AG04449 (cell line): ENCODE measurements at regions of chr19 and their contacts with region 1.

Region 1: GRCh38 chr19:39390755-39391592 is at the starts of genes MED29 and PAF1:
- DNase-seq: peak; percentile 97
- H3K4me3 ChIP-seq: peak within 1 kb of the TSS; percentile 99
- CTCF ChIP-seq: no peak

Region 2: GRCh38 chr19:39341719-39342604 is 49.0 kb before region 1 on chr19 and contains the start of gene SAMD4B:
- CTCF ChIA-PET with region 1: interaction called, 3 read pairs
- POLR2A ChIA-PET with region 1: interaction called, 19 read pairs
- DNase-seq: peak; percentile 72
- H3K4me3 ChIP-seq: peak within 1 kb of the TSS; percentile 90
- CTCF ChIP-seq: peak; percentile 88

Region 3: GRCh38 chr19:39412100-39412866 is 21.3 kb after region 1 on chr19 and contains the start of gene PLEKHG2:
- CTCF ChIA-PET with region 1: interaction called, 102 read pairs
- POLR2A ChIA-PET with region 1: interaction called, 11 read pairs
- DNase-seq: peak; percentile 99
- H3K4me3 ChIP-seq: peak within 1 kb of the TSS; percentile 87
- CTCF ChIP-seq: peak; percentile 84